Ovary (tissue), 10 donors: ENCODE measurements at regions of chr2 and their contacts with region 1.

Region 1: GRCh38 chr2:99337113-99338028 is at the start of gene EIF5B:
- DNase-seq: peak; percentile 94 to 97 (median 95)
- H3K4me3 ChIP-seq: peak within 1 kb of the TSS; percentile 83
- H3K27ac ChIP-seq: peak within 1 kb of the TSS; percentile 39 to 77
- H3K4me1 ChIP-seq: peaks cover 2% of the 10 kb centered on the region
- H3K27me3 ChIP-seq: no peaks in the 10 kb centered on the region
- CTCF ChIP-seq: peak; percentile 30 to 69 (median 59)
- EP300 ChIP-seq: no peak
- POLR2A ChIP-seq: peak; percentile 54
- total RNA-seq, gene EIF5B: 20.4 to 38.8 (median 30.4) TPM

Region 2: DNA sequence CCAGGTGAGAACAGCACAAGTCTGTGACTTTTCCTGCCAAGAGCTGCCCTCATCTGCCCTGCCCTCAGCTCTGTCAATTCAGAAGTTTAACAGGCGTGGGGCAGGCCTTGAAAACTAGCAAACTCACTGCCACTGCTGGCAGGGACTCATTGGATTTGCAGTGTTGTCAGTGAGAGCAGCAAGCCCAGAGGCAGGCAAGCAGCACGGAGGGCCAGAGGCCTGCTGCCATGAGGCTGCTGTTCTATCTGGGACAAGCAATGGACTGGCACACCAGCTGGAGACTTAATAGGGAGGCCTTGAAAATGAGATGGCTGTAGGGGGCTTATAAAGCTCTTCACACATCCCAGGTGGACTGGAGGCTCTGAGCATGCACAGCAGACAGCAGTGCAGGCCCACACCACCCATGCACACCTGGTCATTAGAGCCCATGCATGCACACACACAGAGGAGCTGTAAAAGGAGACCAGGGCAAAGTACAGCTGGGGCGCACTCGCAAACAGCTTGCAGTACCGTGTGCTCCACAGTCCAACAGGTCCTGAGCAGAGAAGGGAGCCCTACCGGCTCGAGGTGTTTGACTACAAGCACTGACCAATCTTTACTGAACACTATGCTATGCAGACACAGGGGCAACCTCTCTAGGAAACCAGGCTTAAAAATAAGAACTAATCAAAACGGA is 635.1 kb before region 1 on chr2:
- intact Hi-C with region 1: no loop called
- DNase-seq: peak in 1 of 5 donors; percentile 10
- H3K4me3 ChIP-seq: no peak overlapping the region
- H3K27ac ChIP-seq: no peak overlapping the region
- H3K4me1 ChIP-seq: peaks cover 3% of the 10 kb centered on the region
- H3K27me3 ChIP-seq: no peaks in the 10 kb centered on the region
- CTCF ChIP-seq: no peak
- EP300 ChIP-seq: no peak
- POLR2A ChIP-seq: no peak

Region 3: DNA sequence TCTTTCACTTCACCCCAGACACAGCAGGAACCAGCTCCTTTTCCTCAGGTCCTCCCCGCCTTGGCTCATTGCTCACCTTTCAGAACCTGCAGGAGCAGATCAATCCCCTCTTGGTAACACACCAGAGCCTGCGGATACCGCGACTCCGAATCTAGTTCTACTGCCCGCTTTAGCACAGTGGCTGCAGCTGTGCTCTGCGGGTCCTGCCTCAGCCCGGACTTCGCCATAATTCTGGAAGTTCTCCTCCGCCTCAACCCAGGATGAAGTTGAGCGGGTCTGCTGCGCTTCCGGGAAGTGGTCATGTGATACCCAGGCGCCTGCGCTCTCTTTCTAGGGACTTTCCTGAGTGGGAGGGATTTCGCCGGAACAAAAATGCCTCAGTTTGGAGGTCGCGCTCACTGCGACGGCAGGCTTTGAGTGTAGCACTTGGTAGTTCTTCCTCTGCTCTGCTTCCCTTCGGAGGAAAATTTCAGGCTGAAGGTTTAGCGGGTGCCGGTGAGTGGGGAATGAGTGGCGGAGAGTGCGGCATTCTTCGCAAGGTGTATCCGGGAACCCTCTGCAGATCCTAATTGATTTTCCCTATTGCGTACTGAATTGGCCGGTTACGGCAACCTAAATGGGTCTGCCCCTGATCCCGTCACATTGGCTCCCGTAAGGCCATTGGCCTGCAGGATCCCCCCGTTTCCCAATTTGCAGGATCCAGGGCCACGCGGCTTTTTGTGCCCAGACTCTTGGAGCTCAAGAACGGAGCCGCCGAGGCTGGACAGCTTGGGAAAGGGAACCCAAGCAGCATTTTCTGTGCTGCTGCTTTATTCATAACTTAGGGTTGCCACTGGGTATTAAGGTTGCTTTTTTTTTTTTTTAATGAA is 156.4 kb before region 1 on chr2 and contains the starts of genes MITD1 and MRPL30:
- intact Hi-C with region 1: loop called in 2 of 4 experiments (anchors 10 kb)
- DNase-seq: peak; percentile 87 to 92 (median 91)
- H3K4me3 ChIP-seq: peak within 1 kb of the TSS; percentile 78
- H3K27ac ChIP-seq: no peak within 1 kb of the TSS
- H3K4me1 ChIP-seq: peaks cover 10% of the 10 kb centered on the region
- H3K27me3 ChIP-seq: no peaks in the 10 kb centered on the region
- CTCF ChIP-seq: no peak
- EP300 ChIP-seq: no peak
- POLR2A ChIP-seq: peak; percentile 24
- total RNA-seq, gene MITD1: 16.0 to 26.1 (median 20.1) TPM
- total RNA-seq, gene MRPL30: 18.7 to 29.0 (median 21.8) TPM

Region 4: DNA sequence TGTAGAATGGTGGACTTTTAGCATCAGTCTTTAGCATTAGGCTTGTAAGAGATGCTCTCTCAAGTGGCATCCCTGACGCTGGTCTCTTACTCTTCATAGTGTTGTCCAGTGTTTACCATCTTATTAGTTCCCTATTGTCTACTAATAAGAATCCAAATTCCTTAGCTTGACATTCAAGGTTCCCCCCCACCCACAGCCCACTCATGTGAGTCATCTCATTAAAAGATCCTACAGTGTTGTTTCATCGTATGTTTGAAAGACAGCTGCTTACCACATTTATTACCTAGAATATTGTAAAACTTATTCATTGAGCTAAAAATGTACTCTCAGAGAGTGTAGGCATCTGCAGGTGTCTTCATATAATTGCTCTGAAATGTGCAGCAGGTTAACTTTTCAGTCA is 28.3 kb after region 1 on chr2:
- intact Hi-C with region 1: no loop called
- DNase-seq: no peak
- H3K4me3 ChIP-seq: no peak overlapping the region
- H3K27ac ChIP-seq: no peak overlapping the region
- H3K4me1 ChIP-seq: no peaks in the 10 kb centered on the region
- H3K27me3 ChIP-seq: no peaks in the 10 kb centered on the region
- CTCF ChIP-seq: no peak
- EP300 ChIP-seq: no peak
- POLR2A ChIP-seq: no peak

Region 5: GRCh38 chr2:99489761-99490622 is 152.6 kb after region 1 on chr2 and contains the start of gene REV1:
- intact Hi-C with region 1: loop called in 2 of 4 experiments (anchors 5 to 10 kb)
- DNase-seq: peak; percentile 92 to 96 (median 95)
- H3K4me3 ChIP-seq: peak within 1 kb of the TSS; percentile 93
- H3K27ac ChIP-seq: peak within 1 kb of the TSS; percentile 98 to 99
- H3K4me1 ChIP-seq: no peaks in the 10 kb centered on the region
- H3K27me3 ChIP-seq: no peaks in the 10 kb centered on the region
- CTCF ChIP-seq: peak; percentile 69 to 98 (median 96)
- EP300 ChIP-seq: no peak
- POLR2A ChIP-seq: peak; percentile 55
- total RNA-seq, gene REV1: 43.2 to 63.3 (median 53.1) TPM

Region 6: GRCh38 chr2:99495115-99495860 is 157.9 kb after region 1 on chr2:
- intact Hi-C with region 1: loop called in 2 of 4 experiments (anchors 5 to 10 kb)
- DNase-seq: no peak
- H3K4me3 ChIP-seq: no peak overlapping the region
- H3K27ac ChIP-seq: no peak overlapping the region
- H3K4me1 ChIP-seq: no peaks in the 10 kb centered on the region
- H3K27me3 ChIP-seq: no peaks in the 10 kb centered on the region
- CTCF ChIP-seq: no peak
- EP300 ChIP-seq: no peak
- POLR2A ChIP-seq: no peak